Activated CD8-positive, alpha-beta T cell treated with anti-CD3 and anti-CD28 coated beads for 36 hours (primary cell): ENCODE measurements at regions of chr7 and their contacts with region 1.

Region 1: DNA sequence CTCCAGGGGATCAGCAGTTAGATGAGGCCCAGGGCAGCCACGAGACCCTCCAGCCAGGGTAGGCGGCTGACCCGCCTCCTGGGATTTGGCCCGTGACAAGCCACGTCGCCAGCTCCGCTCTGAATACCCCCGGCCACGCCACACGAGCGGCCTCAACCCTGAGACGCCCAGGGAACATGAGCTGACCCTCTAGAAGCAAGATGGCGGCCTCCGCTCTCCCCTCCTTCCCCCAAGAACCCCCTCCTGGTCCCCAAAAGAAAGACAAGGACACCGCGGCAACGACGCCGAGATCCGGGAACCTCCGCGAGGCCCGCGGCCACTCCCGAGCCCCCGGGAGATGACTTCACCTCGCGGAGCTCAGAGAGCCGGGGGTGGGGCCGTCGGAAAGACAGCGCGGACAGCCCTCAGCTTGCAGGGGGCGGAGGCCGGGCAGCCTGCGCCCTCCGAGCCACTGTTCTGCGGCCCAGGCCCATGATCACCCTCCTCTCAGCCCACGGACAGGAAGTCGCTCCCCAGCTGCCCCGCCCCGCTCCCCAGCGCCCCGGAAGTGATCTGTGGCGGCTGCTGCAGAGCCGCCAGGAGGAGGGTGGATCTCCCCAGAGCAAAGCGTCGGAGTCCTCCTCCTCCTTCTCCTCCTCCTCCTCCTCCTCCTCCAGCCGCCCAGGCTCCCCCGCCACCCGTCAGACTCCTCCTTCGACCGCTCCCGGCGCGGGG is at the start of gene RALA:
- DNase-seq: peak; percentile 90
- ATAC-seq: peak; percentile 96
- H3K4me3 Mint-ChIP-seq: peak within 1 kb of the TSS; percentile 99
- H3K27ac Mint-ChIP-seq: peak within 1 kb of the TSS; percentile 95
- H3K4me1 Mint-ChIP-seq: peaks cover 47% of the 10 kb centered on the region
- H3K27me3 Mint-ChIP-seq: no peaks in the 10 kb centered on the region
- CTCF ChIP-seq: no peak
- total RNA-seq, gene RALA: 32.5 to 32.8 TPM

Region 2: DNA sequence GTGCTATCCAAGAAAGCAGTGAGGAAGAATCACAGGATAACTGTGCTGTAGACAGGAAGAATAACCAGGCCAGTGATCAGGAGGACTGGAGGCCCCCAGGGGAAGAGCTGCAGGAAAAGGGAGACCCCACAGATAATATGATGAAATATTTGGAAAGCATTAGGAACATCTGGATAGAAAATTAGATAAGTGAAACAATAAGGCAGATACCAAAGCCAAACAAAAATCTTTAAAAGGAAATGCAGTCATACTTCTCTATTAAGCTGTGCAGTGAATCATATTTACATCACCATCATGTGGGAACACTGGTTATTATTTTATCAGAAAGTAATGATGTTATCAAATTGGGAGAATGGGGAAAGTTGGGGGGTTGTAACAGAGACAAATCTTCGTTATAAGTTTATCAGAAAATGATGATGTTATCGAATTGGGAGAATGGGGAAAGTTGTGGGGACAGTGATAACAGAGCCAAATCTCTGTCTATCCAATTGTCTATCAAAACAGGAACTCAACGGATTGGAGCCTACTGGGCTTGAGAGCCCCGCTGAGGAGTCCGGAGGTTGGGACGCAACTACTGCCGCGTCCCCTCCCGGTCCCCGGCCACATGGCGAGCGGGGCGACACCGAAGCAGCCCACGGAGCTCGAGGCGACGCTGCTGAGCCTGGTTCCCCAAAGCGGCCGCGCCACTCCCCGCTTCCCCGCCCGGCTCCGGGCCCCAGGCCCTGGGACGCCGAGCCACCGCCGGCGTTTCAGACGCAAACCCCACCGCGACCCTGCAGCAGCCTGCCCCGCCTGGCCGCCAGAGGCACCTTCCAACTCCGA is 13.9 kb before region 1 on chr7:
- CTCF ChIA-PET with region 1: interaction called, 13 read pairs
- POLR2A ChIA-PET with region 1: interaction called, 12 read pairs
- intact Hi-C with region 1: no loop called
- DNase-seq: peak; percentile 21
- ATAC-seq: peak; percentile 68
- H3K4me3 Mint-ChIP-seq: peak overlapping the region; percentile 54
- H3K27ac Mint-ChIP-seq: peak overlapping the region; percentile 58
- H3K4me1 Mint-ChIP-seq: peaks cover 38% of the 10 kb centered on the region
- H3K27me3 Mint-ChIP-seq: peaks cover 12% of the 10 kb centered on the region
- CTCF ChIP-seq: no peak